B cell (primary cell): ENCODE measurements at regions of chr1 and their contacts with region 1.

Region 1: GRCh38 chr1:243708210-243708609 is 141.8 kb downstream of the AKT3 start:
- DNase-seq: peak; percentile 33
- ATAC-seq: no peak
- H3K4me3 ChIP-seq: no peak overlapping the region
- H3K4me3 Mint-ChIP-seq: no peak overlapping the region
- H3K27ac ChIP-seq: no peak overlapping the region
- H3K27ac Mint-ChIP-seq: no peak overlapping the region
- H3K4me1 ChIP-seq: peaks cover 0 to 3% of the 10 kb centered on the region in 2 donors
- H3K4me1 Mint-ChIP-seq: peaks cover 10% of the 10 kb centered on the region
- H3K27me3 ChIP-seq: no peaks in the 10 kb centered on the region
- H3K27me3 Mint-ChIP-seq: no peaks in the 10 kb centered on the region
- CTCF ChIP-seq: peak; percentile 73

Region 2: DNA sequence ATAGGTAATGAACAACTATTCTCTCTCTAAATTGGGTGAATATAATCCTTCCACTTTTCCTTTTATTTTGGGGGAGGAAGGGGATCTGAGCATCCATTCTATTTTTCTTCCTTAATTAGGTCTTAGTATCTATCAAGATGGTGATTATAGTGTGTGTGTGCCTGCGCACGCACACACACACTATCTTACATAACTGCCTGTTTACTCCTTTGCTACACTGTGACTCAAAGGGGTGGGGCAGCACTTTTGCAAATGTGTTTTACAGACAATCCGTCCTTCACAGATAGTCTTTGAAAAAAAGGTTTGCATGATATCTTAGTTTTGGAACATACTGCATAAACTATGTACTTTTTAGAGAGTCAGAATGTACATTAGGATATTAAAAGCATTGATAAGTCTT is 260.9 kb before region 1 on chr1:
- CTCF ChIA-PET with region 1: no interaction called
- POLR2A ChIA-PET with region 1: no interaction called
- intact Hi-C with region 1: no loop called
- DNase-seq: no peak
- ATAC-seq: no peak
- H3K4me3 ChIP-seq: no peak overlapping the region
- H3K4me3 Mint-ChIP-seq: no peak overlapping the region
- H3K27ac ChIP-seq: no peak overlapping the region
- H3K27ac Mint-ChIP-seq: no peak overlapping the region
- H3K4me1 ChIP-seq: peaks cover 21 to 28% of the 10 kb centered on the region in 2 donors
- H3K4me1 Mint-ChIP-seq: peaks cover 37% of the 10 kb centered on the region
- H3K27me3 ChIP-seq: no peaks in the 10 kb centered on the region
- H3K27me3 Mint-ChIP-seq: no peaks in the 10 kb centered on the region
- CTCF ChIP-seq: no peak

Region 3: DNA sequence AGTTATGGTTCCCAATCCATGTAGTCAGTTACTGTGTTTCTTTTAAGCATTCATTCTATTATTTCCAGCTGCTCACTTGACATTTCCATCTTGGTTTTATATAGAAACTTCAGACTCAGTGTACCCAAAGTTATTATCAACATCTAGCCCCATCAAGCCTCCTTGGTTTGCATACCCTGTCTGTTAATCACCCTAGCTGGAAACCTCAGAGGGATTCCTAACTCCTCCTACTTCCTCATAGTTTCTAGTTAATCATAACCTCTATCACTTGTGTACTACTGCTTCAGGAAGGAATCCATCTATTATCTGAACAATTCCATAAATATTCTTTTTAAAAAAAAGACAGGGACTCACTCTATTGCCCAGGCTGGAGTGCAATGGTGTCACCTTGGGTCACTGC is 159.1 kb before region 1 on chr1:
- CTCF ChIA-PET with region 1: no interaction called
- POLR2A ChIA-PET with region 1: no interaction called
- intact Hi-C with region 1: no loop called
- DNase-seq: no peak
- ATAC-seq: no peak
- H3K4me3 ChIP-seq: no peak overlapping the region
- H3K4me3 Mint-ChIP-seq: no peak overlapping the region
- H3K27ac ChIP-seq: no peak overlapping the region
- H3K27ac Mint-ChIP-seq: no peak overlapping the region
- H3K4me1 ChIP-seq: no peaks in the 10 kb centered on the region
- H3K4me1 Mint-ChIP-seq: no peaks in the 10 kb centered on the region
- H3K27me3 ChIP-seq: no peaks in the 10 kb centered on the region
- H3K27me3 Mint-ChIP-seq: no peaks in the 10 kb centered on the region
- CTCF ChIP-seq: no peak

Region 4: GRCh38 chr1:243727503-243728203 is 19.4 kb after region 1 on chr1:
- CTCF ChIA-PET with region 1: interaction called, 3 read pairs
- POLR2A ChIA-PET with region 1: no interaction called
- intact Hi-C with region 1: loop called (anchors 2 kb)
- DNase-seq: peak; percentile 76
- ATAC-seq: peak; percentile 85
- H3K4me3 ChIP-seq: peak overlapping the region in 3 of 5 experiments; percentile 6 to 39 (median 8)
- H3K4me3 Mint-ChIP-seq: peak overlapping the region; percentile 58
- H3K27ac ChIP-seq: peak overlapping the region; percentile 74 to 78
- H3K27ac Mint-ChIP-seq: peak overlapping the region; percentile 89
- H3K4me1 ChIP-seq: peaks cover 30 to 35% of the 10 kb centered on the region in 2 donors
- H3K4me1 Mint-ChIP-seq: peaks cover 67% of the 10 kb centered on the region
- H3K27me3 ChIP-seq: no peaks in the 10 kb centered on the region
- H3K27me3 Mint-ChIP-seq: no peaks in the 10 kb centered on the region
- CTCF ChIP-seq: no peak

Region 5: GRCh38 chr1:243748706-243749283 is 40.6 kb after region 1 on chr1:
- CTCF ChIA-PET with region 1: interaction called, 32 read pairs
- POLR2A ChIA-PET with region 1: no interaction called
- intact Hi-C with region 1: loop called (anchors 1 kb)
- DNase-seq: peak; percentile 73
- ATAC-seq: peak; percentile 93
- H3K4me3 ChIP-seq: no peak overlapping the region
- H3K4me3 Mint-ChIP-seq: no peak overlapping the region
- H3K27ac ChIP-seq: no peak overlapping the region
- H3K27ac Mint-ChIP-seq: no peak overlapping the region
- H3K4me1 ChIP-seq: no peaks in the 10 kb centered on the region
- H3K4me1 Mint-ChIP-seq: peaks cover 1% of the 10 kb centered on the region
- H3K27me3 ChIP-seq: no peaks in the 10 kb centered on the region
- H3K27me3 Mint-ChIP-seq: no peaks in the 10 kb centered on the region
- CTCF ChIP-seq: peak; percentile 94

Region 6: DNA sequence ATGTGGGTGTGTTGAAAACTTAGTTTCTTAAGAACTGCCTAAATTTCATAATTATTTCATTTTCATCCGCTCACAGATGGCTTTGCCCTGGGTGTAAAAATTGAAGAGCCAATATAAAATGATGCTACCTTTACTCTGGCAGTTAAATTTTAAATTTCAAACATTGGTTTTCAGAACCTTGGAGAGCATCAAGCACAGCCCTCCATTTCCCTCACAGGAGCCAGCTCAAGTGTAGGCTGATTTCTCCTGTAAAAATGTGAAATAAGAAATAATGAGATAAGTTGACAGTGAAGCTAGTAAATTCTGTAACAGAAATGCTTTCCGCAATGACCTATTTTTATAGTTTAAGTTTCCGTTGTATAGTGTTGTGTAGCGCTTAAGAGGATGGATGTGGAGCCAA is 195.7 kb after region 1 on chr1:
- CTCF ChIA-PET with region 1: no interaction called
- POLR2A ChIA-PET with region 1: no interaction called
- intact Hi-C with region 1: no loop called
- DNase-seq: no peak
- ATAC-seq: no peak
- H3K4me3 ChIP-seq: no peak overlapping the region
- H3K4me3 Mint-ChIP-seq: no peak overlapping the region
- H3K27ac ChIP-seq: no peak overlapping the region
- H3K27ac Mint-ChIP-seq: no peak overlapping the region
- H3K4me1 ChIP-seq: no peaks in the 10 kb centered on the region
- H3K4me1 Mint-ChIP-seq: no peaks in the 10 kb centered on the region
- H3K27me3 ChIP-seq: peaks cover 0 to 14% (median 4%) of the 10 kb centered on the region in 4 experiments
- H3K27me3 Mint-ChIP-seq: peaks cover 25% of the 10 kb centered on the region
- CTCF ChIP-seq: no peak

Region 7: DNA sequence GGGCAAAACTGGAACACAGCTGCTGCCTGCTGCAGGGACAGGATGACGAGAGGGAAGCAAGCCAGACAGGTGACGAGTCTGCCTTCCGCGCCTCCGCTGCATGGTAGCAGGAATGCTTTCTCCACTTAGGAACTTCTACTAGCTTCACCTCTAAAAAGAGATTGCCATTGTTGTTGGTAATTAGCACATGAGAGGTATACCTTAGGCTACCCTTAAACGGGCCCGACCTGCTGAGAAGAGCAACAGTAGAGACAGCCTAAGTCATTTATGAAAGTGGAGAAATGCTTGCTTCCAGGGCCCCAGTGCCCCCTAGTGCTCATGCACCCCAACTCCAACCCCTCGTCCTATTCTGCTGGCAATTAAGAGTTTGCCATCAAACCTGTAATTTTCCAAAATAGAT is 238.7 kb after region 1 on chr1:
- CTCF ChIA-PET with region 1: interaction called, 3 read pairs
- POLR2A ChIA-PET with region 1: no interaction called
- intact Hi-C with region 1: loop called (anchors 10 kb)
- DNase-seq: peak; percentile 37
- ATAC-seq: no peak
- H3K4me3 ChIP-seq: no peak overlapping the region
- H3K4me3 Mint-ChIP-seq: no peak overlapping the region
- H3K27ac ChIP-seq: no peak overlapping the region
- H3K27ac Mint-ChIP-seq: no peak overlapping the region
- H3K4me1 ChIP-seq: no peaks in the 10 kb centered on the region
- H3K4me1 Mint-ChIP-seq: no peaks in the 10 kb centered on the region
- H3K27me3 ChIP-seq: peaks cover 0 to 9% (median 2%) of the 10 kb centered on the region in 4 experiments
- H3K27me3 Mint-ChIP-seq: peaks cover 8% of the 10 kb centered on the region
- CTCF ChIP-seq: peak; percentile 51

Region 8: DNA sequence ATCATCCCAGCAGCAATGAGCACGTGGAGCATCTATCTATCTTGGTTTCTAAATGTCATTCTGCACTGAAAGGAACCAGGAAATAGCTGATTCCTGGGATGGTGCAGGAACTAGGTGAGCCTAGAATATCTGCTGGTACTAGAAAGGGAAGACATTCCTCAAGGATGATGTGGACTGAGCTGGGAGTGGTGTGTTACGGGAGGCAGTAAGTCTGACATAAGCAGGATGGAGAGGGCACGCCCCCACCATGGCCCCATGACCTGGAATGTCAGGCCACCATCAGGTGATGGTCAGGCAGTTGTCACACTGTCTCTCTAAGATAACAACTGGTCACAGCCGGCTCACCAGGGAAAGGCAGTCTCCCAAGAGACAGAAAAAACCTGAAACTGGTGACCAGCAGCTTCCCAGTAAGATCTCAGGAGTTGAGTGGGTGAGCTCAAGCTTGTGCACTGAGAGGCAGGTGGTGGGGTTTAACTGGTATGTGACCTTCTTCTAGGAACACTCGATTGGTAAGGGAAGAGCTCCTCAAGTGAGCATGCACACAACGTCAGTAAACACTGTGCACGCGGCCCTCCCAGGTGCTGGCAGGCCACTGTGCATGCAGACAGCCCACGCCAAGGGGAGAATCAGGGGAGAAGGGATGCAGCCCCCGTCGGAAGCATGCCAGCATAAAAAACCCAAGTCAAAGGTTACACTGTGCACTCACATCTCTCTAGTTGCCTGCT is 594.8 kb after region 1 on chr1:
- CTCF ChIA-PET with region 1: interaction called, 3 read pairs
- POLR2A ChIA-PET with region 1: no interaction called
- intact Hi-C with region 1: loop called (anchors 1 kb)
- DNase-seq: no peak
- ATAC-seq: no peak
- H3K4me3 ChIP-seq: no peak overlapping the region
- H3K4me3 Mint-ChIP-seq: no peak overlapping the region
- H3K27ac ChIP-seq: no peak overlapping the region
- H3K27ac Mint-ChIP-seq: no peak overlapping the region
- H3K4me1 ChIP-seq: peaks cover 4 to 17% of the 10 kb centered on the region in 2 donors
- H3K4me1 Mint-ChIP-seq: peaks cover 10% of the 10 kb centered on the region
- H3K27me3 ChIP-seq: no peaks in the 10 kb centered on the region
- H3K27me3 Mint-ChIP-seq: no peaks in the 10 kb centered on the region
- CTCF ChIP-seq: no peak